ENCODE measurements at regions of chr16 and their contacts with region 1.

Region 1: GRCh38 chr16:84970447-84971127 is 40.7 kb downstream of the ZDHHC7 start:
- DNase-seq: peak; percentile 69 to 86 (median 80)
- H3K4me3 ChIP-seq: no peak overlapping the region
- H3K27ac ChIP-seq: peak overlapping the region in 2 of 59 donors; percentile 35 to 64
- H3K27me3 ChIP-seq: no peaks in the 10 kb centered on the region
- CTCF ChIP-seq: peak; percentile 87 to 99 (median 96)

Region 2: GRCh38 chr16:84504420-84505248 is 466.0 kb before region 1 on chr16 and contains the start of gene MEAK7:
- intact Hi-C with region 1: loop called in 1 of 2 experiments (anchors 10 kb)
- DNase-seq: peak; percentile 96 to 99 (median 99)
- H3K4me3 ChIP-seq: peak within 1 kb of the TSS; percentile 55 to 92 (median 81)
- H3K27ac ChIP-seq: peak within 1 kb of the TSS in 56 of 59 donors; percentile 9 to 90 (median 76)
- H3K27me3 ChIP-seq: no peaks in the 10 kb centered on the region
- CTCF ChIP-seq: peak in 28 of 56 donors; percentile 6 to 57 (median 30)
- total RNA-seq, gene MEAK7: 12.5 to 34.5 (median 20.1) TPM

Region 3: DNA sequence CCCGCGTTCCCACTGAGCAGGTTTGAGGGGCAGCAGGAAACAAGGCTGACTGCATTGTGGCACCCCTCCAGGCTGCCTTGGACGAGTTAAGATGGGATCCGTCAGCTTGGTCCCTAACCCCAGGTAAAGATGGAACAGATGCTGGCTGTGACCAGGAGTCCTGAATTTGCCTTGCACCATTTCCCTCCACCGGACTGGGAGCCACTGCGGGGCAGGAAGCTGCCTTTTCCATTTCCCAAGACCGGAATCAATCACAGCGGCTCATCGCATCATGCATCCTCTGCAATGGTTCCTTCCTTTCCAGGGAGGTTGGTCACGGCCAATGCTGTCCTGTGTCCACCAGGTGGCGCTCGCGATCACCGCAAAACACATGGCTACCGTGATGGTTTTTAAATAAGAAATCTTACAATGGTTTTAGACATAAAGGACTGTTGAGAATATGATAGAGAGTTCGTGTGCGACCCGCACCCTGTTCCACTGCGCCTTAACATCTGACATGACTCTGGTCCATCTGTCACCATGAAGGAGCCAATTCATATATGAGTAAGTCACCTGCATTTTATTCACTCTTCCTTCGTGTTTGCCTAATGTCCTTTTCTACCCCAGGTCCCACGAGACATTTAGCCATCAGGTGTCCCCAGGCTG is 459.3 kb before region 1 on chr16:
- intact Hi-C with region 1: loop called (anchors 5 to 10 kb)
- DNase-seq: peak; percentile 72 to 89 (median 83)
- H3K4me3 ChIP-seq: peak overlapping the region in 58 of 59 donors; percentile 8 to 72 (median 46)
- H3K27ac ChIP-seq: peak overlapping the region in 9 of 59 donors; percentile 9 to 79 (median 62)
- H3K27me3 ChIP-seq: no peaks in the 10 kb centered on the region
- CTCF ChIP-seq: peak; percentile 85 to 100 (median 98)

Region 4: GRCh38 chr16:84754353-84754856 is 216.2 kb before region 1 on chr16:
- intact Hi-C with region 1: loop called (anchors 1 to 2 kb)
- DNase-seq: peak in 2 of 10 donors; percentile 67 to 82
- H3K4me3 ChIP-seq: peak overlapping the region in 25 of 59 donors; percentile 0 to 41 (median 26)
- H3K27ac ChIP-seq: peak overlapping the region in 28 of 59 donors; percentile 0 to 70 (median 41)
- H3K27me3 ChIP-seq: no peaks in the 10 kb centered on the region
- CTCF ChIP-seq: peak; percentile 81 to 98 (median 92)

Region 5: GRCh38 chr16:84925092-84925772 is 45.4 kb before region 1 on chr16:
- intact Hi-C with region 1: loop called in 1 of 2 experiments (anchors 5 kb)
- DNase-seq: peak in 4 of 10 donors; percentile 30 to 53 (median 44)
- H3K4me3 ChIP-seq: no peak overlapping the region
- H3K27ac ChIP-seq: no peak overlapping the region
- H3K27me3 ChIP-seq: no peaks in the 10 kb centered on the region
- CTCF ChIP-seq: peak; percentile 42 to 85 (median 72)